ENCODE measurements at regions of chr3 and their contacts with region 1.

Region 1: GRCh38 chr3:42096796-42097565 is 5.8 kb downstream of the TRAK1 start:
- DNase-seq: no peak
- H3K4me3 ChIP-seq: no peak overlapping the region
- H3K27ac ChIP-seq: no peak overlapping the region
- H3K4me1 ChIP-seq: peaks cover 74% of the 10 kb centered on the region
- H3K27me3 ChIP-seq: no peaks in the 10 kb centered on the region
- CTCF ChIP-seq: no peak
- POLR2A ChIP-seq: no peak

Region 2: GRCh38 chr3:41640076-41640475 is 456.9 kb before region 1 on chr3:
- intact Hi-C with region 1: no loop called
- DNase-seq: no peak
- H3K4me3 ChIP-seq: no peak overlapping the region
- H3K27ac ChIP-seq: no peak overlapping the region
- H3K4me1 ChIP-seq: no peaks in the 10 kb centered on the region
- H3K27me3 ChIP-seq: no peaks in the 10 kb centered on the region
- CTCF ChIP-seq: no peak
- POLR2A ChIP-seq: no peak

Region 3: GRCh38 chr3:42012935-42013690 is 83.9 kb before region 1 on chr3:
- intact Hi-C with region 1: loop called (anchors 5 kb)
- DNase-seq: no peak
- H3K4me3 ChIP-seq: peak overlapping the region; percentile 97 to 100
- H3K27ac ChIP-seq: peak overlapping the region; percentile 91
- H3K4me1 ChIP-seq: peaks cover 37% of the 10 kb centered on the region
- H3K27me3 ChIP-seq: no peaks in the 10 kb centered on the region
- CTCF ChIP-seq: no peak
- POLR2A ChIP-seq: peak in 1 of 2 donors; percentile 21

Region 4: DNA sequence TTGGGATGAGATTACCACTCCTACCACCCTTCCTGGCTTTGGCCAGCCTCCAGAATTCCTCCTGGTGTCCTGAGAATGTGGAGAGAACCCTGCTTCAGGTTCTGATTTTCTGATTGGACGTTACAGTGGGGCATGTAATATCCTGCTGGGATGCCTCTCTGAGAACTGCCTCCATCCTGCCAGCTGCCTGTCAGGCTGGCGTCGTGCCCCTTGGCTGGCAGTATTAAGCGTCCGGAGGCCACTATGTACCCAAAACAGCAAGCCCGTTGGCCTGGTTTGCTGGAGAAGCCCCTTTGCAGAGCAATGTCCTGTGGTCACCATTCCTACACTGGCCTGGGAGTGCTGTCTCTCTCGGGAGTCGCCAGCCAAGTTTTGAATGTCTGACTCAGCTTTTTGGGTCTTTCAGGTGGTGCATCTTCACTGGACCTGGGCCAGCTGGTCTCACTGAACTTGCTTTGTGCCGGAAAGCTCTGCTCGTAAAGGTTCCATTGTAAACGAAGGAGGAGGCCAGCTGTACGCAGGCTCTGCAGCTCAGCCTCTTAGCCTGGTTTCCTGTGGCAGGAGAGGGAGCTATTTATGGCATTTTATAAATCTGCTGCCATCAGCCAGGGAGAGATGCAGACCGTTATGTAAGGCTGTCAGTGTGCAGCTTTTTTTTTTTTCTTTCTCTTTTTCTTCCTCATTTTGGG is 24.9 kb before region 1 on chr3:
- intact Hi-C with region 1: no loop called
- DNase-seq: no peak
- H3K4me3 ChIP-seq: peak overlapping the region; percentile 17 to 35
- H3K27ac ChIP-seq: peak overlapping the region; percentile 75
- H3K4me1 ChIP-seq: peaks cover 49% of the 10 kb centered on the region
- H3K27me3 ChIP-seq: no peaks in the 10 kb centered on the region
- CTCF ChIP-seq: no peak
- POLR2A ChIP-seq: no peak

Region 5: GRCh38 chr3:42148982-42149432 is 52.0 kb after region 1 on chr3:
- intact Hi-C with region 1: no loop called
- DNase-seq: no peak
- H3K4me3 ChIP-seq: no peak overlapping the region
- H3K27ac ChIP-seq: no peak overlapping the region
- H3K4me1 ChIP-seq: peaks cover 39% of the 10 kb centered on the region
- H3K27me3 ChIP-seq: no peaks in the 10 kb centered on the region
- CTCF ChIP-seq: no peak
- POLR2A ChIP-seq: no peak